ENCODE measurements at regions of chr10 and their contacts with region 1.

Region 1: DNA sequence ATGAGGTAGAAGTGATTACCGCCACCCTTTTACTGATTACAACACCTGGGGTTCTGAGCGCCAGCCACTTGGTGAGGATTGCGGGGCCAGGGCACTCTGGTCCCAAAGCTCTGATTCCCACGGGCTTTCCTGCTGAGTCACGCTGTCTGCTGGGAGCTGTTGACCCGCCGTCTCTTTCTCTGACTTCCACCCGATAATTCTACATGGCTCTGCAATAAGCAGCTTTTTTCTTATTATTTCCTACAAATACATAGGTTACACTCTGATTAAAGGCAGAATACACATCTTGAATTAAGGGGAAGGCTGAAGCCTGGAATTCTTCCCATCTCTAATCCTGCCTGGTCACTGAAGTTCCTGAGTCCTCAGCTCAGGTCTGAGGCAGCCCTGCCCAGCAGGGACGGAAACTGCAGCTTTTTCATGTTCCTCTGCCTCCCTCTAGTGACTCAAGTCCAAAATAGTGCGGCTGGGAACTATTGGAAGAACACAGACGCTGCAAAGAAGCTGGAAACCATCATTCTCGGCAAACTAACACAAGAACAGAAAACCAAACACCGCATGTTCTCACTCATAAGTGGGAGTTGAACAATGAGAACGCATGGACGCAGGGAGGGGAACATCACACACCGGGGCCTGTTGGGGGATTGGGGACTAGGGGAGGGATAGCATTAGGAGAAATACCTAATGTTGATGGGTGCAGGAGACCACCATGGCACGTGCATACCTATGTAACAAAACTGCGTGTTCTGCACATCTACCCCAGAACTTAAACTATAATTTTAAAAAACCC is 178.3 kb downstream of the PRKCQ start:
- DNase-seq: peak; percentile 60 to 80
- ATAC-seq: peak; percentile 94 to 96 (median 94)
- H3K4me3 ChIP-seq: peak overlapping the region; percentile 63
- H3K27ac ChIP-seq: peak overlapping the region; percentile 75
- H3K4me1 ChIP-seq: peaks cover 28% of the 10 kb centered on the region
- H3K27me3 ChIP-seq: no peaks in the 10 kb centered on the region
- CTCF ChIP-seq: peak; percentile 75

Region 2: GRCh38 chr10:6014241-6014761 is 387.5 kb before region 1 on chr10:
- intact Hi-C with region 1: loop called (anchors 2 to 5 kb)
- DNase-seq: peak in 1 of 2 donors; percentile 35
- ATAC-seq: peak in 3 of 4 donors; percentile 59 to 79 (median 63)
- H3K4me3 ChIP-seq: no peak overlapping the region
- H3K27ac ChIP-seq: no peak overlapping the region
- H3K4me1 ChIP-seq: no peaks in the 10 kb centered on the region
- H3K27me3 ChIP-seq: peaks cover 0 to 5% (median 0%) of the 10 kb centered on the region in 3 donors
- CTCF ChIP-seq: peak; percentile 77

Region 3: GRCh38 chr10:6088721-6089390 is 312.9 kb before region 1 on chr10 and contains the start of gene RBM17:
- intact Hi-C with region 1: loop called (anchors 5 kb)
- DNase-seq: peak; percentile 95 to 98
- ATAC-seq: peak; percentile 94 to 98 (median 96)
- H3K4me3 ChIP-seq: peak within 1 kb of the TSS; percentile 93
- H3K27ac ChIP-seq: peak within 1 kb of the TSS; percentile 91
- H3K4me1 ChIP-seq: peaks cover 48% of the 10 kb centered on the region
- H3K27me3 ChIP-seq: no peaks in the 10 kb centered on the region
- CTCF ChIP-seq: peak; percentile 100
- total RNA-seq, gene RBM17: 74.4 to 104 (median 86.5) TPM

Region 4: DNA sequence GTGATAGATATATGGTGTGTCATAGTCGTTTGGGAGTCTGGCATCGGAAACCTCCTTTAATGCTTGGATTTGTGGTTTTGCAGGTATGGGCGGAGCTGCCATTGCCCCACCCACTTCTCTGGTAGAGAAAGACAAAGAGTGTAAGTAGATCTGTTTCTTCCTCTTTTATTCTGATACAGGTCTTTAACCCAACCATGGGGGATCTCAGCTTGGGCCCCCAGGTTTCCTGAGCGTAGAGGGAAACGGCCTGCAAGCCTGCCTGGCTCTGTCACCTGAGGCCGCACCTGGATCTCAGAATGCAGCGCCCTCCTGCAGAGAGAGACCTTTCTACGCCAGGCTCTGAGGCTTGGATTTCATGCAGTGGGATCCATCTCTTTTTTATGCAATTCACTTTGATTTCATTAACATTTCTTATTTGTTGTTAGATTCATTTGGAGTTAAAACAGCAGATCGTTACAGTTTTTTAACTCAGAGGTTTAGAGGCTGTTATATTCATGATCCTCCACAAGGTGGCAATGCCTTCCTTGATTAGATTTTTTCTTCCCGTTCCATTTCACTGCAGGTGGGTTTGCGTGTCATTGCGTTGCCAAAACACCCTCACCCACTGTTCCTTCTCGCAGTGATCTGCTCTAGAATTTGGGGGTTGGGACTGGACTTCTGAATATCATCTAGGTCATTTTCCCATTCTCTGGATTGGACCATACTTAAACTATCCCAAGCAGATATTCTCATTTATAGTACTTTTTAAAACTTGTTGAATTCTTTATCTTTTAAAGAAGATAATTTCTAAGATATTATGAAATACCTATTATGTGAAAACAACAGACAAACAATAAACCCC is 292.9 kb before region 1 on chr10:
- intact Hi-C with region 1: loop called (anchors 1 to 5 kb)
- DNase-seq: no peak
- ATAC-seq: peak; percentile 39 to 61 (median 57)
- H3K4me3 ChIP-seq: no peak overlapping the region
- H3K27ac ChIP-seq: peak overlapping the region; percentile 12
- H3K4me1 ChIP-seq: peaks cover 16% of the 10 kb centered on the region
- H3K27me3 ChIP-seq: no peaks in the 10 kb centered on the region
- CTCF ChIP-seq: peak; percentile 82

Region 5: DNA sequence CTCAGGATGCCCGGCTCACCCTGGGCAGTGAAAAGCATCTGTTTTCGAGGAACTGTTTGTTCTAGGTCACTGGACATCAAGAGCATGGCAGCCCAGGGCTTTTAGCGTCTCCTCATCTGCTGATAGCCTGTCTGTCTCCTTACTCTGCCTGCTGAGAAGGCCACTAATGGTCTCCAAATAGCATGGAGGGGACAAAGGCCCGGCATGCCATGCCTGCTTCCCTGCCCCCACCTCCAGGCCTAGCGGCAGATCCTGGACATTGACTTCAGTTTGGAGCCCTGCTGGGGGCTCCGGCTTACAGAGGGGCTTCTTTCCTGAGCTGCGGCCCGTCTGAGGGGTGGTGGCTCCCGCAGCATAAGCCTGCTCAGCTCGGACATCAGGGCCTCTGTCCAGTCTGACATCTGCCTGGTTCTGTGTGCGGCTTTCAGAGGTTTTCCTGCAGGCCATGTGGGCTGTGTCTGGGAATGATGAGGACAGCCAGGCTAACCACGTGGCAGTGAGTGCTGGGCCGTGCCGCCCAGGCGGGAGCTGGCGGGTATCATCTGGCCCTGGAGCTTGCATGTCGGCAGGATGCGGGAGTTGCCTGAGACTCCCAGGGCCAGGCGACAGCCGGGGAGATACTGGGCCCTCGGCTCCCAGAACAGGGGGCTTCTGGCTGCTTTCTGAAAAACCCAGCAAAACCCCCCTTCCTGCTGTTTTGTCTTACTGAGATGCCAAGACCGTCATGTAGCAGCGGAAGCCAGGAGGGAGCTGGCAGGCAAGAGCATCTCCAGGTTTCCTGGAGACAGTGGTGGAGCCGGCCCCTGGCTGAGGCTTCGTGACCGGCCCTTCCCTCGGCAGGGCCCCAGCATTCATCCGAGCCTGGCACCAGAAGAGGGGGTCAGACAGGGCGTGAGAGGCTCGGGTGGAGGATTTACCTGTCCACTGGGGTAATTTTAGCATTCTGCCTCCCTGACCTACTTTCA is 189.8 kb before region 1 on chr10:
- intact Hi-C with region 1: loop called in 1 of 2 experiments (anchors 5 kb)
- DNase-seq: peak in 1 of 2 donors; percentile 65
- ATAC-seq: peak; percentile 35 to 66 (median 58)
- H3K4me3 ChIP-seq: peak overlapping the region; percentile 39
- H3K27ac ChIP-seq: peak overlapping the region; percentile 72
- H3K4me1 ChIP-seq: peaks cover 41% of the 10 kb centered on the region
- H3K27me3 ChIP-seq: no peaks in the 10 kb centered on the region
- CTCF ChIP-seq: no peak

Measured in psoas muscle (tissue), 8 donors.